ENCODE measurements at regions of chr10 and their contacts with region 1.

Region 1: GRCh38 chr10:113027574-113028455 is 77.8 kb downstream of the TCF7L2 start:
- DNase-seq: no peak
- ATAC-seq: no peak
- H3K4me3 ChIP-seq: no peak overlapping the region
- H3K27ac ChIP-seq: no peak overlapping the region
- H3K4me1 ChIP-seq: peaks cover 0 to 35% (median 3%) of the 10 kb centered on the region in 4 donors
- H3K27me3 ChIP-seq: no peaks in the 10 kb centered on the region
- CTCF ChIP-seq: no peak
- POLR2A ChIP-seq: no peak

Region 2: DNA sequence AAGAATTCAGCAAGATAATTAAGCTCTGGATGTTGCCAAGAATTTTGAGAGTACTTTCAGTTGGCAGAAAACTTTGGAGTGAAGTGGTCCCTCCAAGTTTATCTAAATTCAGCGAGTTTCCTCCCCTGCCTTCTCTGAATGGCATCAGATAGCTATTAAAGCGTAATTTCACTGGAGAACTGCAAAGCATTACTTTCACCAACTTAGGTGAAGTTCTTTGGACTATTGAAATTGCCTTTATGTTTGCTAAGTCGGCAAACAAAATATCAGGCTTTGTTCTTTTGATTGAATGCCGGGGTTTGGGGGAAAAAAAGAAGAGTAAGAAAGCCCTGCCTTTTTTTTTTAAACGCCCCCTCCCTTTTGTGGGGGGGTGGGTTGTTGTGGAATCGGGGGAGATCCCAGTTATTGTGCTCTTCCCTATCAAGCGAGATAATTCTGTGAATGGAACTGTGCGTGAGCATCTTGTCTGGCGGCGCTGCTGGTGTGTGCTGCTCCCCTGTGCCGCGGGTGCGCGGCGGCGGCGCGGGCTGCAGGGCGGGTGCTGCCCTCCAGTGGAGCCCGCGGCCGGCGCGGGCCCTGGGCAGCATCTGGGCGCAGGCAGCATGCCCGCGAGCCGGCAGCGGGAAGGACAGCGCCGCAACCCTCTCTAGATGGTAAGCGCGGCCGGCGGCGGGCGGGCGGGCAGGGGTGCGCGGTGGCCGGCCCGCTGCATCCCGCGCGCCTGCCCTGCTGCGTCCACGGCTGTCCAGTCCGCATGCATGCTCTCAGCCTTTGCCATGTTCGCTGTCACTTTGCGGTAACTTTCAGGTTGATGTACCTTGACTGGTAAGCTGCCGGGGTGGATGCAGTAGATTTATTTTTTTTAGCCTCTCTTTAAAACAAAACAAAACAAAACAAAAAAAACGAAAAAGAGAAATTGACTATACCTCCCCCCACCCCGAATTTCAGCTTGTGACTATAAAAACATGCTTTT is 98.7 kb after region 1 on chr10:
- intact Hi-C with region 1: loop called in 1 of 2 experiments (anchors 10 kb)
- DNase-seq: peak; percentile 76 to 83 (median 83)
- ATAC-seq: peak; percentile 91 to 97 (median 94)
- H3K4me3 ChIP-seq: peak overlapping the region in 2 of 3 donors; percentile 23 to 37
- H3K27ac ChIP-seq: peak overlapping the region in 2 of 3 donors; percentile 7 to 56
- H3K4me1 ChIP-seq: peaks cover 0 to 43% (median 18%) of the 10 kb centered on the region in 4 donors
- H3K27me3 ChIP-seq: no peaks in the 10 kb centered on the region
- CTCF ChIP-seq: peak; percentile 67 to 94 (median 73)
- POLR2A ChIP-seq: no peak

Region 3: DNA sequence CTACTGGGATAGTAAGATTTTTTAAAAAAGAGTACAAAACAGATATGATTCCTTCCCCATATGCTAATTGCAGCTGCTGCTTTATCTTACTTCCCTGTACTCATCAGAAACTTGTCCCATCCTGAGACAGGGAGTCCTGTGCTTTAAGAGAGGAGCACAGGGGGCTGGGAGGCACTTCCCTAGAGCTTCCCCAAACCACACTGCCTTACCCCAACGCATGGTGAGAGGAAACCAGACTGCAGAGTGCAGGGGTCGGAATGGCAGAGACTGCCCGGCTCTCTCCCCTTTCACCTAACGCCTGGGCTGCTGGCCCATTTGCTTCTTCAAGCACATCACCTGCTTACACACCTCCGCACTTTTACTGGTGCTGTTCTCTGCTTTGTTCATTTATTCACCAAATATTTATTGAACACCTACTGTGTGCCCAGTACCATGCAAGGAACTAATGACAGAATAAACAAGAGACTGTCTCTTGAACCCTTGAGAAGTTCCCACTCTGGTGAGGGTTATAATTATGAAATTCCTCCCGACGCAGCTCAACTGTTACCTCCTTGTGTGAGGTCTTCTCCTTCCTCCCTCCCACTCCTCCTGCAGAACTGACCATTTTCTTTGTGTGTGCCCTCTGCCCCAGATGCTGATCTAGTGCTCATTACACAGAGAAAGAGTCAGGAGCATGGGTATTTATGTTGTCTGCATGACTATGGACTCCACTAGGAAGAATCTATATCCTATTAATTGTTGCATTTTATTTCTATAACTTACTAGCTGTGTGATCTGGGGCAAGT is 211.9 kb after region 1 on chr10:
- intact Hi-C with region 1: no loop called
- DNase-seq: no peak
- ATAC-seq: peak in 3 of 4 donors; percentile 25 to 66 (median 42)
- H3K4me3 ChIP-seq: no peak overlapping the region
- H3K27ac ChIP-seq: no peak overlapping the region
- H3K4me1 ChIP-seq: no peaks in the 10 kb centered on the region
- H3K27me3 ChIP-seq: no peaks in the 10 kb centered on the region
- CTCF ChIP-seq: no peak
- POLR2A ChIP-seq: no peak